ENCODE measurements at regions of chr20 and their contacts with region 1.

Region 1: GRCh38 chr20:36399147-36399968 is 93.2 kb downstream of the DLGAP4 start:
- DNase-seq: peak; percentile 96
- ATAC-seq: peak; percentile 96
- H3K4me3 Mint-ChIP-seq: no peak overlapping the region
- H3K27ac Mint-ChIP-seq: peak overlapping the region; percentile 69; the same call in 1 of the 2 replicates
- H3K4me1 Mint-ChIP-seq: peaks cover 18% of the 10 kb centered on the region
- H3K27me3 Mint-ChIP-seq: no peaks in the 10 kb centered on the region
- CTCF ChIP-seq: peak; percentile 63

Region 2: GRCh38 chr20:36181934-36182603 is 217.3 kb before region 1 on chr20:
- CTCF ChIA-PET with region 1: no interaction called
- POLR2A ChIA-PET with region 1: no interaction called
- DNase-seq: no peak
- ATAC-seq: no peak
- H3K4me3 Mint-ChIP-seq: no peak overlapping the region
- H3K27ac Mint-ChIP-seq: no peak overlapping the region
- H3K4me1 Mint-ChIP-seq: no peaks in the 10 kb centered on the region
- H3K27me3 Mint-ChIP-seq: no peaks in the 10 kb centered on the region
- CTCF ChIP-seq: no peak

Region 3: GRCh38 chr20:36199345-36200257 is 199.8 kb before region 1 on chr20:
- CTCF ChIA-PET with region 1: interaction called, 40 read pairs
- POLR2A ChIA-PET with region 1: no interaction called
- DNase-seq: peak; percentile 93
- ATAC-seq: peak; percentile 86
- H3K4me3 Mint-ChIP-seq: no peak overlapping the region
- H3K27ac Mint-ChIP-seq: no peak overlapping the region
- H3K4me1 Mint-ChIP-seq: peaks cover 4% of the 10 kb centered on the region
- H3K27me3 Mint-ChIP-seq: no peaks in the 10 kb centered on the region
- CTCF ChIP-seq: peak; percentile 86

Region 4: DNA sequence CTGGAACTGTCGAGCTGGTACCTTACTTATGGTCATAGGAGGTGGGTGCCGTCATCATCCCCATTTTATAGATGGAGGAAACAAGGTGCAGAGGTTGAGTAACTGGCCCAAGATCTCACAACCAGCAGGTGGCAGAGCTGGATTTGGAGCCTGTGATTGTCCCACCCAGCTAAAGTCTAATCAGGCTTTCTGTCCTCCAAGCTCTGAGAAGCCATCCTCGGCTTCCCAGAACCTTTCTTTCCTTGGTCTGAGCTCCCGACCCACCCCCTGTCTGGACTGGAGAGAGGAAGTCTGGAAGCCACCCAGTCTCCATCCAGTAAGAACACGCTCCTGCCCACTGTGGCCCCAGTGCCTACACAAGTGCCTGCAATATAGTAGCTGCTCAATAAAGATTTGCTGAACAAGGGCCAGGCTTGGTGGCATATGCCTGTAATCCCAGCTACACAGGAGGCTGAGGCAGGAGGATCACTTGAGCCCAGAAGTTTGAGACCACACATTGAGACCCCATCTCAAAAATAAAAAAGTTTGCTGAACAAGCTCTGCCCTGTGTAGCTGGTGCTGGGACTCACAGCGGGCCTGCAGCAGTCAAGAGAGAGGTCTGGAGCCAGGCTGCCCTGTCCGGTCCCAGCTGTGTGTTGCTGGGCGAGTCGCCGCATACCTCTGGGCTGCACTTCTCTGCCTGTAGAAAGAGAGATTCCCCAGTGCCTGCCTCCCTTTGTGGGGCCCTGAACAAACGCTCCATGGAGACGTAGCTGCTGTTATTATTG is 125.8 kb before region 1 on chr20:
- CTCF ChIA-PET with region 1: interaction called, 90 read pairs
- POLR2A ChIA-PET with region 1: interaction called, 3 read pairs
- DNase-seq: no peak
- ATAC-seq: no peak; the same call in 1 of the 2 replicates
- H3K4me3 Mint-ChIP-seq: no peak overlapping the region
- H3K27ac Mint-ChIP-seq: no peak overlapping the region
- H3K4me1 Mint-ChIP-seq: peaks cover 25% of the 10 kb centered on the region
- H3K27me3 Mint-ChIP-seq: no peaks in the 10 kb centered on the region; the same call in 1 of the 2 replicates
- CTCF ChIP-seq: no peak

Region 5: DNA sequence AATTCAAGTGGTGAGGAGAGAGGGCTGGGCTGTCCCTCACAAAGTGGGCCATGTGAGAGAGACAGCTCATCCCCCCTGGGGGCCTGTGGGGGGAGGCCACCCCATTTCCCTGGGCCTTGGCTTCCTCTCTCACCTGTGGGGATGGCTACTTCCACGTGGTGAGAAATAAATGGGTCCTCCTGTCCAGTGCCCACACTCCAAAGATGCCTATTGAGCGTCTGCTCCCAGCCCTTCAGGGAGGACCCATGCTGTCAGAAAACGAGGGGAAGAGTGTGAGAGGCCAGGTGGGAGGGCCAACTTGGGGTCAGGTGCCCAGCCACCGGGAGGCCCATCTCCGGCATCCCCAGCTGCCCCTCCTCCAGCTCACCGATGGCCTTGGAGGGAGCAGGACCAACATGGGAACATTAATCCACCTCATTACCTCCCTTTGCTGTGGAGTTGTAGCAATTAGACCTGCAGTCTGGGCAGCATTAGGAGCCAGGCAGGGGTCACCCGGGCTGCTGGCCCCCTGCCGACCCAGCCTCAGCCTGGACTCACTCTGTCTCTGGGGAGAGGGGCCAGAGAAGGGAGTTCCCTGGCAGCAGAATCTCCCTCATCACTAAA is 68.3 kb before region 1 on chr20:
- CTCF ChIA-PET with region 1: interaction called, 20 read pairs
- POLR2A ChIA-PET with region 1: no interaction called
- DNase-seq: no peak
- ATAC-seq: no peak
- H3K4me3 Mint-ChIP-seq: no peak overlapping the region
- H3K27ac Mint-ChIP-seq: no peak overlapping the region
- H3K4me1 Mint-ChIP-seq: peaks cover 42% of the 10 kb centered on the region
- H3K27me3 Mint-ChIP-seq: peaks cover 66% of the 10 kb centered on the region
- CTCF ChIP-seq: no peak

Region 6: DNA sequence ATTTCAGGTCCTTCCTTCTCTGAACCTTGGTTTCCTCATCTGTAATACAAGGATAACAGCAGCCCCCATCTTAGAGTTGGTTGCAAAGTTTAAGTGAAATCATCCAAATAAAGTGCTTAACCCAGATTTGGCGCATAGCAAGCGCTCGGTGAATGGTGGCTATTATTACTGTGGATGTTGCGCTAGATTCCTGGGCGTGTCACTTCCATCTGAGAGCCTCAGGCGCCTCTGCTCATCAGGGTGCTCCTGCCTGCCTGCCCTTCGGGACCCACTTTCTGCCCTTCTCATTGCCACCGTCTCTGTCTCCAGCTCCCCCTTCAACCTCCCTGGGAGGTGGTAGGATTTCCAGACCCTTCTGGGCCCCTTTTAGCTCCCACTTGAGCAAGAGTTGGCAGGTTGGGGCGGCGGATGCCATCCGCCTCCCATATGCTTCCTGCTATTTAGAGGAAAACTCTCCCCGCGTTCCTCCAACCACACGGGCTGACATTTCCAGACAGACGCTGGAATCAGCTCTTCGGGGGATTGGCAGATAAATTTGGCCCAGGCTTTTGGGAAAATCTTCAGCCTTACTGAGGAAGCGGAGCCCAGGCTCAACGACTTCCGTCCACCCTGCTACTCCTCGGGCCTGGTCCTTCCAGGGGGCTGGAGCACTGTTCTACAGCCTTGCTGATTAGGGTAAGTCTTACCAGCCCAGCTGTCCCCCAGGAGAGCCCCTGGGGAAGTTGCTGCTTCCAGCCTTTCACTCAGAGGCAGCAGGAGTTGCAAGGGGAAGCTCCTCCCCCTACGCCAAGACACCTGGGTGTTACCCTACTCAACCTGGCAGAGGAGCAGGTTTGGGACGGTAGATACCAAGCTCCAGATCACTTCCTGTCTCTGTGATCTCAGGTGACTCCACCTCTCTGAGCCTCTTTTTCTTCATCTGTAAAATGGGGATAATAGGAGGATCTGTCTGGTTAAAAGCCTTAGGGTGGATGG is 21.7 kb before region 1 on chr20:
- CTCF ChIA-PET with region 1: interaction called, 36 read pairs
- POLR2A ChIA-PET with region 1: no interaction called
- DNase-seq: no peak
- ATAC-seq: peak; percentile 74
- H3K4me3 Mint-ChIP-seq: no peak overlapping the region
- H3K27ac Mint-ChIP-seq: no peak overlapping the region
- H3K4me1 Mint-ChIP-seq: no peaks in the 10 kb centered on the region
- H3K27me3 Mint-ChIP-seq: no peaks in the 10 kb centered on the region; the same call in 1 of the 2 replicates
- CTCF ChIP-seq: no peak

Region 7: GRCh38 chr20:36465109-36466080 is 66.0 kb after region 1 on chr20:
- CTCF ChIA-PET with region 1: interaction called, 10 read pairs
- POLR2A ChIA-PET with region 1: no interaction called
- DNase-seq: no peak
- ATAC-seq: peak; percentile 2; the same call in 1 of the 2 replicates
- H3K4me3 Mint-ChIP-seq: no peak overlapping the region
- H3K27ac Mint-ChIP-seq: peak overlapping the region; percentile 65; the same call in 1 of the 2 replicates
- H3K4me1 Mint-ChIP-seq: peaks cover 50% of the 10 kb centered on the region
- H3K27me3 Mint-ChIP-seq: no peaks in the 10 kb centered on the region; the same call in 1 of the 2 replicates
- CTCF ChIP-seq: no peak

Measured in WTC11 (cell line).